Activated CD8-positive, alpha-beta T cell treated with anti-CD3 and anti-CD28 coated beads, Interleukin-2, amount 10 ng/mL, durations not matched to agents 7 days and 5 days (primary cell): ENCODE measurements at regions of chr20 and their contacts with region 1.

Region 1: DNA sequence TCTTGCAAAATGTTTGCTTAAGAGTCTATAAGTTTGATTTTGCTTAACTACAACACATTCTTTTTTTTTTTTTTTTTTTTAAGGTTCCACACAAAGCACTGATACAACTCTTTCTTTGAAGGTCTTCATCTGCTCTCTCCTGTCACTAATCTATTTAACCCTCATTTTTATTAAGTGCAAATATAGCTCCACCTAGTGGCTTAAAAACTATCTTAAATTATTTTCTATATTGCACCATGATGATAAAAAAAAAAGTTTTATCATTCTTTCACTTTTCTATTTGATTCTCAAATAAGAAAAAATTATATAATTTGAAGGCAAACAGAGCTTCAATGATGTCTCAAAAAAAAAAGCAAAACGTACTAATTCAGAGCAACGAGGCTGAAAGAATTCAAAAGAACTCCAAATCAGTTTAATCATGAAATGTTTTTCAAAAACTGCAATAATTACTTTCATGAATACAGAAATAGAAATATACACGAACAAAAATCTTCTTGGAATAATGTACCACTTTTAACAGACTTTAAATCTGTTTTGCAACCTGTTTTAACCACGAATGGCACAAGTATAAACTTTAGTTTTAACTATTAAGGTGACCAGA is 12.8 kb downstream of the ESF1 start:
- DNase-seq: no peak
- ATAC-seq: no peak
- H3K4me3 Mint-ChIP-seq: no peak overlapping the region
- H3K27ac Mint-ChIP-seq: no peak overlapping the region
- H3K4me1 Mint-ChIP-seq: peaks cover under 1% of the 10 kb centered on the region
- H3K27me3 Mint-ChIP-seq: no peaks in the 10 kb centered on the region

Region 2: GRCh38 chr20:13119583-13119982 is 652.4 kb before region 1 on chr20:
- CTCF ChIA-PET with region 1: interaction called, 10 read pairs
- POLR2A ChIA-PET with region 1: no interaction called
- DNase-seq: peak; percentile 58
- ATAC-seq: peak; percentile 86
- H3K4me3 Mint-ChIP-seq: no peak overlapping the region
- H3K27ac Mint-ChIP-seq: no peak overlapping the region
- H3K4me1 Mint-ChIP-seq: no peaks in the 10 kb centered on the region
- H3K27me3 Mint-ChIP-seq: no peaks in the 10 kb centered on the region

Region 3: DNA sequence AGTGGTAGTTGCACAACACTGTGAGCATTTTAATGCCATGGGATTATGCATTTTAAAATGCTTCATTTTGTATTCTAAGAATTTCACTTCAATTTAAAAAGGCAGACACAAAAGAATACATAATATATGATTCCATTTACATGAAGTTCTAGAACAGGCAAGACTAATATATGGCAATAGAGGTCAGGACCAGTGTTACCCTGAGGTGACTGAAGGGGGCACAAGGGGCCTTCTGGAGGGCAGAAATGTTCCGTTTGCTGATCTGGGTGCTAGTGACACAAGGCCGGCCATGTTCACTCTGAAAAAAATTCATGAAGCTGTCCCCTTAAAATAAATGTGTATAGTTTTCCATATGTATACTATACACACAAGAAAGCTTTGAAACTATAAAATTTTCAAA is 161.8 kb before region 1 on chr20:
- CTCF ChIA-PET with region 1: interaction called, 10 read pairs
- POLR2A ChIA-PET with region 1: no interaction called
- DNase-seq: no peak
- ATAC-seq: no peak
- H3K4me3 Mint-ChIP-seq: no peak overlapping the region
- H3K27ac Mint-ChIP-seq: no peak overlapping the region
- H3K4me1 Mint-ChIP-seq: no peaks in the 10 kb centered on the region
- H3K27me3 Mint-ChIP-seq: no peaks in the 10 kb centered on the region

Region 4: DNA sequence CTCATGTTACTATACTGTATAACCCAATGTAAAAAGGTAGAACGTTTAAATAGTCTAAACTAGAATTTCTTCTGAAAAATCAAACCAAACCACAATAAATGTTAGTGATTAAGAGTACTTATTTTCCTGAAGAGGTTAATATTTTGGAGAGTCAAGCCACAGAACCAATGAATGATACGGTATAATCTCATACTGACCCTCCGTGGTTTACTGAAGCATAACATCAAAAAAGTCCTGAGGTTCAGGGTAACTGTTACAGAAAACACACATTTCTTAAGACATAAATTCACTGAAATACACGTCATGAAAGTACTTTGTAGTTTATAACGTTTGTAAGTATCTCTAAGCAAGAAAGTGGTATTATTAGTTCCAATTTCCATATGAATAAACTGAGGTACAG is 16.1 kb before region 1 on chr20:
- CTCF ChIA-PET with region 1: interaction called, 11 read pairs
- POLR2A ChIA-PET with region 1: interaction called, 3 read pairs
- DNase-seq: no peak
- ATAC-seq: no peak
- H3K4me3 Mint-ChIP-seq: no peak overlapping the region
- H3K27ac Mint-ChIP-seq: no peak overlapping the region
- H3K4me1 Mint-ChIP-seq: no peaks in the 10 kb centered on the region
- H3K27me3 Mint-ChIP-seq: no peaks in the 10 kb centered on the region

Region 5: GRCh38 chr20:13784893-13785715 is 13.2 kb after region 1 on chr20 and contains the starts of genes ESF1 and NDUFAF5:
- CTCF ChIA-PET with region 1: interaction called, 29 read pairs
- POLR2A ChIA-PET with region 1: interaction called, 7 read pairs
- DNase-seq: peak; percentile 96
- ATAC-seq: peak; percentile 98
- H3K4me3 Mint-ChIP-seq: peak within 1 kb of the TSS; percentile 95
- H3K27ac Mint-ChIP-seq: peak within 1 kb of the TSS; percentile 93
- H3K4me1 Mint-ChIP-seq: peaks cover 34% of the 10 kb centered on the region
- H3K27me3 Mint-ChIP-seq: no peaks in the 10 kb centered on the region
- total RNA-seq, gene ESF1: 13.1 to 13.2 TPM
- total RNA-seq, gene NDUFAF5: 26.3 to 34.6 TPM

Region 6: GRCh38 chr20:13934992-13935894 is 163.3 kb after region 1 on chr20:
- CTCF ChIA-PET with region 1: no interaction called
- POLR2A ChIA-PET with region 1: no interaction called
- DNase-seq: no peak
- ATAC-seq: no peak
- H3K4me3 Mint-ChIP-seq: no peak overlapping the region
- H3K27ac Mint-ChIP-seq: no peak overlapping the region
- H3K4me1 Mint-ChIP-seq: no peaks in the 10 kb centered on the region
- H3K27me3 Mint-ChIP-seq: no peaks in the 10 kb centered on the region

Region 7: GRCh38 chr20:14219801-14220461 is 448.0 kb after region 1 on chr20:
- CTCF ChIA-PET with region 1: no interaction called
- POLR2A ChIA-PET with region 1: no interaction called
- DNase-seq: no peak
- ATAC-seq: no peak
- H3K4me3 Mint-ChIP-seq: no peak overlapping the region
- H3K27ac Mint-ChIP-seq: no peak overlapping the region
- H3K4me1 Mint-ChIP-seq: no peaks in the 10 kb centered on the region
- H3K27me3 Mint-ChIP-seq: no peaks in the 10 kb centered on the region